ENCODE measurements at regions of chr14 and their contacts with region 1.

Region 1: GRCh38 chr14:53967606-53968005 is 11.0 kb upstream of the BMP4 start:
- DNase-seq: peak in 1 of 7 donors; percentile 49
- H3K4me3 ChIP-seq: no peak overlapping the region
- H3K27ac ChIP-seq: no peak overlapping the region
- H3K4me1 ChIP-seq: peaks cover 0 to 6% of the 10 kb centered on the region in 2 donors
- H3K27me3 ChIP-seq: no peaks in the 10 kb centered on the region
- CTCF ChIP-seq: no peak
- POLR2A ChIP-seq: no peak

Region 2: GRCh38 chr14:53570411-53571387 is 396.9 kb before region 1 on chr14:
- intact Hi-C with region 1: no loop called
- DNase-seq: no peak
- H3K4me3 ChIP-seq: no peak overlapping the region
- H3K27ac ChIP-seq: no peak overlapping the region
- H3K4me1 ChIP-seq: no peaks in the 10 kb centered on the region
- H3K27me3 ChIP-seq: no peaks in the 10 kb centered on the region
- CTCF ChIP-seq: no peak
- POLR2A ChIP-seq: no peak

Region 3: GRCh38 chr14:54108481-54109471 is 141.2 kb after region 1 on chr14:
- intact Hi-C with region 1: loop called in 1 of 2 experiments (anchors 5 kb)
- DNase-seq: no peak
- H3K4me3 ChIP-seq: no peak overlapping the region
- H3K27ac ChIP-seq: peak overlapping the region in 4 of 5 donors; percentile 35 to 50 (median 40)
- H3K4me1 ChIP-seq: peaks cover 17 to 25% of the 10 kb centered on the region in 2 donors
- H3K27me3 ChIP-seq: no peaks in the 10 kb centered on the region
- CTCF ChIP-seq: no peak
- POLR2A ChIP-seq: no peak

Measured in adrenal gland (tissue), 19 donors.